ENCODE measurements at regions of chr3 and their contacts with region 1.

Region 1: DNA sequence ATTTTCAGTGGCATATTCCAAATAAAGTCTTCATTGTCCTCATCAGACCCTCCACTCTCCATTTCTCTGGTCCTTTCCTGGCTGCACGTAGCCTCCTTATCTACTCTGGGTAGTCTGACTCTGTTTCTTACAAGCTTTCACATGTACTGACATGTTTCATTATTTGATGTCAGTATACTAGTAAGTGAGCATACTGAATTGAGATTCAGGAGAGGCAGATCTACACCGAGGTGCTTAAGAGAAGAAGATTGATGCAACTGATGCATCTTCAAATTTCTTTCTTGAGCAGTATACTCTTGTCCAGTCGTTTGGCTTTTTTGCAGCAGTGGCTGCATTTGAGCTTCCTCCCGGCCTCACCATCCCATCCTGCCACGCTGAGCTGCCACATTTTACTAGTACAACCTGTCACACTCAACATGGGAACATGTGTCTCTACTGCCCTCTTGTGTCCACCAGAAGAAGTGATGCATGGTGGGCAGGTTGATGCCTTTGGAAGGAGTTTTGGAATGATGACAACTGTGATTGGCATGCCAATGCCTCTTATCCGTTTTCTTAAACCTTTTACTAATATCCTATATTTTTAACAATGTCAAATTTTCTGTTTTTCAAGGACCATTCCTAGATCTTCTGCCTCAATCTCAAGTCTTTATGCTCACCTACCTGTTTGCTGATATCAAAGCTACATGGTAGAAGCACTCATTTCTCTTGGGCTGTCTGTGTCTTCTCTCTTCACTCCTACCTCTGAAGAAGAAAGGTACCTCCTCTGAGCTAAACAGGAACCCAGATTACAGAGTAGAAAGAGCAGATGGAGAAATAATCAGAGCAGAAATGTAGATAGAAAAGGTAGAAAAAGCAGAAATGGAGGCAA is 38.7 kb downstream of the GUCA1C start:
- DNase-seq: no peak
- H3K4me3 ChIP-seq: no peak overlapping the region
- H3K27me3 ChIP-seq: no peaks in the 10 kb centered on the region
- CTCF ChIP-seq: peak; percentile 85

Region 2: DNA sequence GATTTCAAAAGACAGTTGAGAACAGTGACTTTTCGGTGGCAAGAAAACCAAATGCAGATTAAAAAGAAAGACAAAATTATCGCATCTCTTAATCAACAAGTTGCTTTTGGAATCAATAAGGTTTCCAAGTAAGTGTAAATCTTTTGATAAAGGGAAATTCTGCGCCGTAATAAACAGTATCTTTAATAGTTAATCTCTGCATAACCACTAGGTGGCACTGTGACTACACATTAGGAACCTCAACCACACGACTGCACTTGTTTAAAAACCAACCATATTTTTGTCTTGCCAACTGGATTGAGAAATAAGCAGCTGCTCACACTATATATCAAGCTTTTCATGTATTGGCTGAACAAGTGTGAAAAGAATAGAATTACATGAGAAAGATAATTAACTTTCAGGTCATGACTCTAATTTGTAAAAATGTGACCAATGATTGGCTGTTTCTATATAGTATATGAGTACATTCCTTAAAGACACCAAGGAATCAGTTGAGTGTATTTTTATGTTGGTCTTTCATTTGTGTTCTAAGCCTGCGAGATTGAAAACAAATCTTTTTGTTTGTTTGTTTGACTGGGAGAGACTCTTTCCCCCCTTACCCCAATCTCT is 252.8 kb before region 1 on chr3:
- CTCF ChIA-PET with region 1: interaction called, 30 read pairs
- POLR2A ChIA-PET with region 1: no interaction called
- DNase-seq: peak; percentile 19
- H3K4me3 ChIP-seq: no peak overlapping the region
- H3K27me3 ChIP-seq: no peaks in the 10 kb centered on the region
- CTCF ChIP-seq: peak; percentile 68

Measured in BJ (cell line).